ENCODE measurements at regions of chr19 and their contacts with region 1.

Region 1: DNA sequence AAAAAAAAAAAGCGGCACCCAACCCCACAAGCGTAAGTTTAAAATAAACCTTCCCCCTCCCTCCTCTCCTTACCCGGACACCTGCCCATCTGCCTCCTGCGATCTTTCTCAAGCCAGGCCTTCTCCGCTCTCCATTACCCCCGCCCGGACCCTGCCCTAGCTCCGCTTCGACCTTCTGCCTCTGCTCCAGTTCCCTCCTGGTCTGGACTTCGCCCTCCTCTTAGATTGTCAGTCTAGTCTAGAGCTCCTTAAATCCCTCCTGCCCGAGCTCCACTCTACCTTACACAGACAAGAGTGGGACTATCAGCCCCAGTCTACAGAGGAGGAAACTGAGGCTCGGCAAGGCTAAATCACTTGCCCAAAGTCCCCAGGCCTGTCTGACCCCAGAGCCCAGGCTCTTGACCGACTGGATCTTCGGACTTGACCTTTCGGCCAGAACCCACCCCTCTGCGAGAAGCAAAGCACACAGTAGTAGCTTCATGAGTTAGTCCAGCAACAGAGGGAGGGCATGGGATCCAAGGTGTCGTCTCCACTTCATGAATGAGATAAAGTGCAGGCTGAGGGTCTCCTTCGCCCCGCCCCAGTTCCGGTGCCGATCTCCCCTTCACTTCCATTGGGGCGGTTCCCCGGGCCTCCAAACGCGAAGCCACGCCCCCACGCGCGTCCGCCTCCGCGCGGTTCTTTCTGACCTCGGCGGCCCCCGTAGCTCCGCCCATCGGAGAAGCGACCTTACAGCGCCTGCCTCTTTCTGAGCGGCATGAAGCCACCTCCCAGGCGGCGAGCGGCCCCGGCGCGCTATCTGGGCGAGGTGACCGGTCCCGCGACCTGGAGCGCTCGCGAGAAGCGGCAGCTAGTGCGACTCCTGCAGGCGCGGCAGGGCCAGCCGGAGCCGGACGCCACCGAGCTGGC is at the start of gene SNAPC2:
- DNase-seq: peak; percentile 96 to 98 (median 98)
- ATAC-seq: peak; percentile 32 to 75 (median 68)
- H3K4me3 ChIP-seq: peak within 1 kb of the TSS; percentile 52 to 98 (median 79)
- H3K27ac ChIP-seq: peak within 1 kb of the TSS; percentile 70 to 97 (median 90)
- H3K4me1 ChIP-seq: peaks cover 5 to 63% (median 38%) of the 10 kb centered on the region in 12 donors
- H3K27me3 ChIP-seq: peaks cover 16 to 46% (median 32%) of the 10 kb centered on the region in 9 donors
- CTCF ChIP-seq: peak in 2 of 12 donors; percentile 10 to 14
- POLR2A ChIP-seq: peak in 1 of 2 donors; percentile 74
- total RNA-seq, gene SNAPC2: 6.8 to 16.7 (median 9.3) TPM

Region 2: GRCh38 chr19:7852851-7853769 is 66.8 kb before region 1 on chr19:
- intact Hi-C with region 1: loop called in 7 of 10 experiments (anchors 2 to 5 kb)
- DNase-seq: peak in 4 of 5 donors; percentile 49 to 64 (median 54)
- ATAC-seq: peak; percentile 30 to 66 (median 56)
- H3K4me3 ChIP-seq: no peak overlapping the region
- H3K27ac ChIP-seq: no peak overlapping the region
- H3K4me1 ChIP-seq: peaks cover 0 to 21% (median 4%) of the 10 kb centered on the region in 12 donors
- H3K27me3 ChIP-seq: no peaks in the 10 kb centered on the region
- CTCF ChIP-seq: peak; percentile 68 to 92 (median 77)
- POLR2A ChIP-seq: no peak

Region 3: GRCh38 chr19:7858109-7858830 is 61.6 kb before region 1 on chr19:
- intact Hi-C with region 1: loop called in 7 of 10 experiments (anchors 2 to 5 kb)
- DNase-seq: no peak
- ATAC-seq: no peak
- H3K4me3 ChIP-seq: no peak overlapping the region
- H3K27ac ChIP-seq: no peak overlapping the region
- H3K4me1 ChIP-seq: peaks cover 0 to 19% (median 12%) of the 10 kb centered on the region in 12 donors
- H3K27me3 ChIP-seq: peaks cover 0 to 18% (median 0%) of the 10 kb centered on the region in 9 donors
- CTCF ChIP-seq: no peak
- POLR2A ChIP-seq: no peak

Measured in heart left ventricle (tissue), 16 donors.